ENCODE measurements at regions of chr17 and their contacts with region 1.

Region 1: GRCh38 chr17:38735161-38735997 is 5.2 kb downstream of the CISD3 start:
- DNase-seq: peak; percentile 76
- ATAC-seq: peak; percentile 39
- H3K4me3 Mint-ChIP-seq: no peak overlapping the region
- H3K27ac Mint-ChIP-seq: no peak overlapping the region
- H3K4me1 Mint-ChIP-seq: peaks cover 26% of the 10 kb centered on the region
- H3K27me3 Mint-ChIP-seq: peaks cover 5% of the 10 kb centered on the region
- CTCF ChIP-seq: no peak

Region 2: DNA sequence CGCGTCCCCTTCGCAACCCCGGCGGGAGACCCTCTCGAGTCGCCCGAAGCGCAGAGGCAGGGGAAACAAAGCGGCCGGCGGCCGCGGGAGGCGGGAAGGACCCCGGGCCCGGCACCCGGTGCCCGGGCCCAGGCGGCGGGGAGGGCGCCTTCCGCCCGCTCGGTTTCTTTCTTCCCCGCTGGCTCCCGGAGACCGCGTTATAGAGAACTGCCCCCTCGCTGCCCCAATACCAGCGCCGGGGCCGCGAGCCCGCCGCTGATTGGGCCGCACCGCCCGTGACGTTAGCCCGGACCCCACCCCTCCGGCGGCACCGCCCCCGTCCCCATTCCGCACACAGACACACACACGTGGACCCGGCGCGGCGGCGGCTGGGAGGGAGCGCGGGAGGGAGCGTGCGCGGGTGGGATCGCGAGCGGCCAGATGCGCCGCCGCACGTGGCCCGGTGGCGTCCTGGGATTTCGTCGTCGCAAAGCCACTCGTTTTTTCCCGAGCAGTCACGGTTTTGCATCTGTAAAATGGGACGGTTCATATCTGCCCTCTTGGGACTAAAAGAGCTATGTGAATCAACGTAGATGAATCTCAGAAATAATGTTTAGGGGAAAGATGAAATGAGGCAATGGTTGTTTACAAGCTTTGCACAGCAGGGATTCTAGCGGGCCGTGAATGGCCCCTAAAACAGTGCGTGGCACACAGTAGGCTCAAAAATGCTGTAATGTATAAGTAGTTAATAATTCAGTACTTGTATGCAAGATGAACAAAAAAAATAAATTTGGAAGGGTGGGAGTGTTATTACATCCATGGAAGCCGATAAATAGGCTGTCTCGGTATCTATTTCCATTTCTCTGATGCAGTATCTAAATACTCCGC is 60.4 kb before region 1 on chr17 and contains the start of gene EPOP:
- CTCF ChIA-PET with region 1: interaction called, 135 read pairs
- POLR2A ChIA-PET with region 1: interaction called, 9 read pairs
- intact Hi-C with region 1: loop called (anchors 1 kb)
- DNase-seq: peak; percentile 79
- ATAC-seq: peak; percentile 88
- H3K4me3 Mint-ChIP-seq: peak within 1 kb of the TSS; percentile 70
- H3K27ac Mint-ChIP-seq: no peak within 1 kb of the TSS
- H3K4me1 Mint-ChIP-seq: peaks cover 32% of the 10 kb centered on the region
- H3K27me3 Mint-ChIP-seq: peaks cover 29% of the 10 kb centered on the region
- CTCF ChIP-seq: no peak
- total RNA-seq, gene EPOP: 2.8 and 3.0 TPM in 2 replicates

Region 3: GRCh38 chr17:38745545-38745944 is 10.2 kb after region 1 on chr17:
- CTCF ChIA-PET with region 1: interaction called, 13 read pairs
- POLR2A ChIA-PET with region 1: interaction called, 4 read pairs
- intact Hi-C with region 1: no loop called
- DNase-seq: no peak
- ATAC-seq: no peak
- H3K4me3 Mint-ChIP-seq: no peak overlapping the region
- H3K27ac Mint-ChIP-seq: no peak overlapping the region
- H3K4me1 Mint-ChIP-seq: peaks cover 36% of the 10 kb centered on the region
- H3K27me3 Mint-ChIP-seq: peaks cover 29% of the 10 kb centered on the region
- CTCF ChIP-seq: no peak

Region 4: GRCh38 chr17:39209317-39210092 is 474.1 kb after region 1 on chr17:
- CTCF ChIA-PET with region 1: no interaction called
- POLR2A ChIA-PET with region 1: no interaction called
- intact Hi-C with region 1: no loop called
- DNase-seq: peak; percentile 45
- ATAC-seq: peak; percentile 37
- H3K4me3 Mint-ChIP-seq: peak overlapping the region; percentile 61
- H3K27ac Mint-ChIP-seq: no peak overlapping the region
- H3K4me1 Mint-ChIP-seq: peaks cover 36% of the 10 kb centered on the region
- H3K27me3 Mint-ChIP-seq: peaks cover 13% of the 10 kb centered on the region
- CTCF ChIP-seq: no peak